ENCODE measurements at regions of chr4 and their contacts with region 1.

Region 1: GRCh38 chr4:109424093-109424841 is 9.3 kb upstream of the SEC24B start:
- DNase-seq: peak; percentile 14
- H3K4me3 Mint-ChIP-seq: no peak overlapping the region
- H3K27ac Mint-ChIP-seq: no peak overlapping the region
- H3K4me1 Mint-ChIP-seq: peaks cover 11% of the 10 kb centered on the region
- H3K27me3 Mint-ChIP-seq: no peaks in the 10 kb centered on the region

Region 2: DNA sequence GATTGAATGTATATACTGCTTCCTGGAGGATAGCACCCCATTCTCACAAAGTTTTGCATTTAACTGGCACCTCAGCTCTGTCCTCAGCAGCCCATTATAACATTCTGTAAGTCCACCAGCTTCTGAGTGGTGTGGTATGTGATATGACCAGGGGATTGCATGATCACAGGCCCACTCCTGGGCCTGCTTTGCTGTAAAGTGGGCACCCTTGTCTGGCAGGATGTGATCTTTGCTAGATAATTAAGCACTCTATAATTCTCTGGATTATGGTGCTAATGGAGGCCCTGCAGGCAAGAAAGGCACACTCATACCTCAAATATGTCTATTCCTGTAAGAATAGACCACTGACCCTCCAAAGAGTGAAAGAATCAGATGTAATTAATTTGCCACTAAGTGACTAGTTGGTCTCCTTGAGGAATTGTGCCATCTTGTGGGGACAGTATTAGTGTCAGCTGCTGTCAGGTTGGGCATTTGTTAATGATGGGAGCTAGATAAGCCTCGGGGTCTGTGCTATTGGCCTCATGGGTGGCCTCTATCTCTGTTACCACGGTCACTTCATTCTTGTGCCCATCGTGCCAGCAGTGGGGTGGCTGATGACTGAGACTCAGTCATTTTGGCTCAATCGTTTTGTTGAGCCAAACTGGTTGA is 379.8 kb after region 1 on chr4:
- CTCF ChIA-PET with region 1: interaction called, 4 read pairs
- POLR2A ChIA-PET with region 1: no interaction called
- intact Hi-C with region 1: loop called (anchors 1 kb)
- DNase-seq: peak; percentile 16
- H3K4me3 Mint-ChIP-seq: no peak overlapping the region
- H3K27ac Mint-ChIP-seq: no peak overlapping the region
- H3K4me1 Mint-ChIP-seq: no peaks in the 10 kb centered on the region
- H3K27me3 Mint-ChIP-seq: peaks cover 3% of the 10 kb centered on the region

Region 3: DNA sequence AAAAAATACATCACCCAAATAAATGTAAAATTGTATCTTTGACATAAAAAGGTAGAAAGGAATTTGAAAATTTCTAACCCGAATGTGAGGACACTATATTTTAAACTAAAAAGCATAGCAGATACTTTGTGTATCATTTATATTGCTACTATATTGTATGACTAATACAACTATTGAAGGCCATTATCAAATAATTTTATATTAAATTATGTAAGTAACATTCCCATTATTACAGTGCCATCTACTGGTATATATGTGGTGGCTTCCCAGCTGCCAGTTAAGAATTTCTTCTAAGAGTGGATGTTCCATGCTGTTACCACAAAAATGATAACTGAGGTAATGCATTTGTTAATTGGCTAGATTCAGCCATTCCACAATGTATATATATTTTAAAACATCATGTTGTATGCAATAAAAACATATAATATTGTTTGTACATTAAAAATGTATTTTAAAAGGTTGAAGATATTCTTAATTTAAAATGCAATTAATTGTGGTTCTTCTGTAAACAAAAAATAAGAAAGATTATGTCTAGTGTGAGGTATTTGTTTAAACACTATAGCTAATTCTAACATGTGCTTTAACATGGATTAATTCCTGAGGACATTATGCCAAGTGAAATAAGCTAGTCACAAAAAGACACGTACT is 553.7 kb after region 1 on chr4:
- CTCF ChIA-PET with region 1: interaction called, 6 read pairs
- POLR2A ChIA-PET with region 1: no interaction called
- intact Hi-C with region 1: loop called (anchors 1 kb)
- DNase-seq: no peak
- H3K4me3 Mint-ChIP-seq: no peak overlapping the region
- H3K27ac Mint-ChIP-seq: no peak overlapping the region
- H3K4me1 Mint-ChIP-seq: no peaks in the 10 kb centered on the region
- H3K27me3 Mint-ChIP-seq: peaks cover 9% of the 10 kb centered on the region

Region 4: DNA sequence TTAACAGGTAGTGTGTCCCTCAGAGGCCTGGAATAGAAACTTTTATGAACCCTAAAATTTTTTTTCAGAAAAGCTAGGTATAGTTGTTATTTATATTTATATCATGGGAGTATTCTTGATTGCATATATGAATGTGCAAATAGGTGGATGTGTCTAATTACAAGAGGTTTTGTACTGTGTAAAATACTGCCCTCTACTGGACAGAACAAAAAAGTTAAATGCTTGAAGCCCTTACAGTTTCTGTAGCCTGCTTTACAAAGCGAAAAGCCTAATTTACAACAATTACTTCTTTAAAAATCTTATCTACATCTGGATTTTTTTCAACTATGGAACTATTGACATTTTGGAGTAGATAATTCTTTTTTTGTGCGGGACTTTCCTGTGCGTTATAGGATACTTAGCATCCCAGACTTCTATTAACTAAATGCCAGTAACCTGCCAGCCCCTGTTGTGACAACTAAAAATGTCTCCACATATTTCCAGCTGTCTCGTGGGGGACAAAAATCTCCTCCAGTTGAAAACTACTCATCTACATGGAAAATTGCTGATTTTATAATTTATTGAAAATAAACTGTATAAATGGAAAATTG is 1086.8 kb after region 1 on chr4:
- CTCF ChIA-PET with region 1: no interaction called
- POLR2A ChIA-PET with region 1: no interaction called
- intact Hi-C with region 1: loop called (anchors 5 kb)
- DNase-seq: no peak
- H3K4me3 Mint-ChIP-seq: no peak overlapping the region
- H3K27ac Mint-ChIP-seq: no peak overlapping the region
- H3K4me1 Mint-ChIP-seq: peaks cover 9% of the 10 kb centered on the region
- H3K27me3 Mint-ChIP-seq: no peaks in the 10 kb centered on the region

Measured in activated CD4-positive, alpha-beta memory T cell treated with anti-CD3 and anti-CD28 coated beads for 36 hours (primary cell).